IMR-90 (cell line): ENCODE measurements at regions of chr9 and their contacts with region 1.

Region 1: GRCh38 chr9:122092611-122093506 is at the start of gene TTLL11:
- DNase-seq: peak; percentile 91
- ATAC-seq: peak; percentile 89
- H3K4me3 ChIP-seq: peak within 1 kb of the TSS; percentile 56
- H3K27ac ChIP-seq: peak within 1 kb of the TSS; percentile 46
- H3K4me1 ChIP-seq: peaks cover 9% of the 10 kb centered on the region
- H3K27me3 ChIP-seq: no peaks in the 10 kb centered on the region; the same call in none of the 2 replicates
- CTCF ChIP-seq: no peak
- POLR2A ChIP-seq: no peak
- RAD21 ChIP-seq: no peak
- total RNA-seq, gene TTLL11: 2.0 and 2.5 TPM in 2 replicates

Region 2: DNA sequence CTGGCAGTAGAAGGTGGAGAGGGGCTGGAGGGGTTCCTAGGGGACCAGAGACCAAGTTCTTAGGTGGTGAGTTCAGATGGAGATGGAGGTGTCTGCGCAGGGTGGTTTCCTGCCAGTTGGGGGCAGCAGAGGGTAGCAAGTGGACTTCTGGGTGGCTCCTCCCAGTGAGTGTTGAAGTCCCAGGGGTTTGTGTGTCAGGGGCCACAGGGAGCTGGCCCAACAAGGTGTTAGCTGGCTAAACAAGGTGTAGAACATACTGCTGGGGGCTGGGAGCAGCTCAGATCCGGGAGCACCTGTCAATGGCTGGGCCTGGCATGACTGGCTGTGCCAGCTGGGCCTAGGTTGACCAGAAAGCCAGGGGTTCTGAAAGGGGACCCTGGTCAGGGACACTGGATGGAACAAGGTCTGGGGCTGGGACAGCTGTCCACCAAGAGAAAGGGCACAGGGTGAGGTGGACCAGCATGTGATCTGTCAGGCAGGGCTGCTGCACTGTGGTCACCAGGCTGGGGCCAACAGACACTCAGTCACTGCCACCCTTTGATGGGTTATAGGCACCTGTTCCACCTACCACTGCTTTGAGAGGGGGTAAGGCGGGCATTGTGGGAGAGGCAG is 405.8 kb before region 1 on chr9:
- CTCF ChIA-PET with region 1: no interaction called
- POLR2A ChIA-PET with region 1: no interaction called
- dilution Hi-C with region 1: no loop called
- in situ Hi-C with region 1: no loop called
- intact Hi-C with region 1: loop called (anchors 10 kb)
- DNase-seq: peak; percentile 65
- ATAC-seq: peak; percentile 92
- H3K4me3 ChIP-seq: no peak overlapping the region
- H3K27ac ChIP-seq: no peak overlapping the region
- H3K4me1 ChIP-seq: peaks cover 5% of the 10 kb centered on the region; the same call in 1 of the 2 replicates
- H3K27me3 ChIP-seq: no peaks in the 10 kb centered on the region
- CTCF ChIP-seq: peak; percentile 92
- POLR2A ChIP-seq: no peak
- RAD21 ChIP-seq: peak; percentile 96

Region 3: DNA sequence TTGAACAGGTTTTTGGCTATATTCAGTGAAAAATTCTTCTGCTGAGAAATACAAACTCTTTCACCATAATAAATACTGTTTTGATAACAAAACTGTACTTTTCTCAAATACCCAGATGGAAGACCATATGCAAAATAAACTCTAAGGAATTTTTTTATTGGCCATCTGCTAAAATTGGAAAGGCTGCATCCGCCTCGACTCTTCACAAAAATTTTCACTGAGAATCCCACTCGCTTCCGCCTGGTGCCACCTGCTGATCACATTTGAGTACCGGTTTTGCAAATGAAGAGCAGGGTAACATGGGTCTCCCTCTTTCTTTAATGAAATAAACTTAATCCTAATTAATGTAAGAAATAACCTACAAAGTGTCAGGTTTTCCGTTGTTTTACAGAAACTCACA is 76.1 kb before region 1 on chr9:
- CTCF ChIA-PET with region 1: no interaction called
- POLR2A ChIA-PET with region 1: no interaction called
- dilution Hi-C with region 1: no loop called
- in situ Hi-C with region 1: no loop called
- intact Hi-C with region 1: no loop called
- DNase-seq: no peak
- ATAC-seq: no peak
- H3K4me3 ChIP-seq: no peak overlapping the region
- H3K27ac ChIP-seq: no peak overlapping the region
- H3K4me1 ChIP-seq: no peaks in the 10 kb centered on the region; the same call in 1 of the 2 replicates
- H3K27me3 ChIP-seq: no peaks in the 10 kb centered on the region
- CTCF ChIP-seq: peak; percentile 35
- POLR2A ChIP-seq: no peak
- RAD21 ChIP-seq: peak; percentile 43

Region 4: GRCh38 chr9:122134822-122135528 is 42.1 kb after region 1 on chr9:
- CTCF ChIA-PET with region 1: no interaction called
- POLR2A ChIA-PET with region 1: no interaction called
- dilution Hi-C with region 1: no loop called
- in situ Hi-C with region 1: no loop called
- intact Hi-C with region 1: no loop called
- DNase-seq: peak; percentile 23
- ATAC-seq: peak; percentile 51; the same call in 1 of the 2 replicates
- H3K4me3 ChIP-seq: no peak overlapping the region
- H3K27ac ChIP-seq: no peak overlapping the region
- H3K4me1 ChIP-seq: peaks cover 8% of the 10 kb centered on the region
- H3K27me3 ChIP-seq: peaks cover 4% of the 10 kb centered on the region; the same call in 1 of the 2 replicates
- CTCF ChIP-seq: no peak
- POLR2A ChIP-seq: no peak
- RAD21 ChIP-seq: no peak